Right ventricle myocardium superior (tissue), 1 donor: ENCODE measurements at regions of chr19 and their contacts with region 1.

Region 1: DNA sequence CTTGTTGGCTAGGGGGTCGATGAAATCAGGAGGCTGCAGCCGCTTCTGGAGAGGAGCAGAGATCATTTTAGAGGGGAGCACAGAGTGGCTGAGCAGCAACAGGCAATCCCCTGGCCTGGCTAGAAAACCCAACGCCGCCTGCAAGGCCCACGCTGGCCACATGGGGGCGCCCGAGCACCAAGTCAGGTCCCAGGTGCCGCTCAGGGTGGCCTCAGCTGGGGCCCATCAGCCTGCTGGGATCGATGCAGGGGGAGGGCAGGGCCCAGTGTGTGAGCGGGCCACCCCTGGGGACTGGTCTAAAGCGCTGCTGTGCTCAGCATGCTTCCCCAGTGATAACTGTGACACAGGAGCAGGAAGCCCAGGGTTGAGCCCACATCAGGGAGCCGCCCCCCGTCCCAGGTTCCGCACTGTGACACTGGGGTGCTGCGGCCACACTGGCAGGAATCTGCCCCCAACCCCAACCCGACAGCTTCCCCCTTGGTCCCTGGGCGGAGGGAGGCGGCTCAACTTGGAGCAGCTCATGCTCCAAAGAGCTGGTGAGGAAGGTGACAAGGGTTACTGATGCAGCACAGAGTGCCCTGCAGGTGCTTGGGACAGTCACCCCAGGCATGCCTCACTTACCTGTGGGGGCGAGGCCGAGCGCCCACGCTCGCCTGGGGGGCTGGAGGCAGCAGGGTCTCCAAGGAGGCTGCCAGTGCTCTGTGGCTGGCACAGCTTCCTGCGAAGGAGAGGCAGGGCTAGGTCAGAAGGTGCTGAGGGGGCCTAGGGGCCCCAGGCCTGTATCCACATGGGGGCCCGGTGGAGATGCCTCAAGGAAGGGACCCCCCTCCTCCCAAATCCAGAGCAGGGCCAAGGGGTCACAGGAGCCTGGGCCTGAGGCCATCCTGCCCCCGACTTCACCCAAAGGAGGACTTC is 13.3 kb upstream of the ISYNA1 start:
- DNase-seq: peak; percentile 93
- ATAC-seq: peak; percentile 90

Region 2: GRCh38 chr19:18496167-18496979 is 45.2 kb after region 1 on chr19:
- intact Hi-C with region 1: no loop called
- DNase-seq: no peak
- ATAC-seq: no peak

Region 3: DNA sequence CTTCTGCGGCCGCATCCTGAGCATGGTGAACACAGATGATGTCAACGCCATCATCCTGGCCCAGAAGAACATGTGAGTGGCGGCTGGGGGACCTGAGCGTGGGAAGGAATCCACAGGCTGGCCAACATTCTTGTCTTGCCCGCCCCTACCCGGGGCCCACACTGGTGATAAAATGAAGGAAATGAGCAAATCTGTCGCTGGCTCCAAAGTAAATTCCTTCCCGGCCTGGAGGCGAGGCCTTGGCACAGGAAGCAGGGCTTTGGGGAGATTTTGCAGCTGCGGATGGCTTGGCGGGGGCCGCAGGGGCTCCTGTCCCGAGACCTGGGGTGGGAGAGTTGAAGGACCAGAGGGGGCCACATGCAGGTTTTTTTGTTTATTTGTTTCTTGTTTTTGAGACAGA is 110.9 kb after region 1 on chr19:
- intact Hi-C with region 1: loop called (anchors 5 kb)
- DNase-seq: peak; percentile 60
- ATAC-seq: peak; percentile 2

Region 4: GRCh38 chr19:18865973-18866799 is 415.0 kb after region 1 on chr19:
- intact Hi-C with region 1: loop called (anchors 10 kb)
- DNase-seq: peak; percentile 81
- ATAC-seq: peak; percentile 85